ENCODE measurements at regions of chr2 and their contacts with region 1.

Region 1: DNA sequence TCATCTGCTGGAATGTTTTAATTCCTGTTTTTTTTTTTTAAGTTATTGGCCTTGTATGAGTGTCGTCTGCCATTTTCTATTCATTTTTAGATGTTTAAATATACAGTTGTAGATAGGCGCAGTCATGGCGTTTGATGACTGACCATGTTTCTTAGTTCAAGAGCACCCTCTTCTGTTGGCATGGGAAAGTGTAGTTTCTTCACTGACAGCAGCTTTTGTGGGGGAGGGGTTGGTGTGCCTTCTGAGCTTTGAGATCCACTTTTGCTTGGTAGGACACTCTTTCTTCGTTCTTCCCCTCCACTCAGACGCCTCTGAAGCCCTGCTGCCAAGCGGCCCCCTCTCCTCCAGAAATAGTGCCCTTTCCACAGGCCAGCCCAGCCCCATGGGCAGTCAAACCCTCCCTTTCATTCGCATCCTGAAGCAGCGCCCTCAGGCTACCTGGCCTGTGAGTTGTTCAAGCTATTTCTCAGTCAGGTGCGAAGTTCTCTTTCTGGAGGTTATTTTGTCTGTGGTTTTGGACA is 492.0 kb downstream of the TNS1 start:
- DNase-seq: peak; percentile 50
- H3K4me3 ChIP-seq: no peak overlapping the region
- H3K27ac ChIP-seq: no peak overlapping the region
- H3K4me1 ChIP-seq: no peaks in the 10 kb centered on the region
- H3K27me3 ChIP-seq: no peaks in the 10 kb centered on the region
- CTCF ChIP-seq: peak; percentile 28

Region 2: DNA sequence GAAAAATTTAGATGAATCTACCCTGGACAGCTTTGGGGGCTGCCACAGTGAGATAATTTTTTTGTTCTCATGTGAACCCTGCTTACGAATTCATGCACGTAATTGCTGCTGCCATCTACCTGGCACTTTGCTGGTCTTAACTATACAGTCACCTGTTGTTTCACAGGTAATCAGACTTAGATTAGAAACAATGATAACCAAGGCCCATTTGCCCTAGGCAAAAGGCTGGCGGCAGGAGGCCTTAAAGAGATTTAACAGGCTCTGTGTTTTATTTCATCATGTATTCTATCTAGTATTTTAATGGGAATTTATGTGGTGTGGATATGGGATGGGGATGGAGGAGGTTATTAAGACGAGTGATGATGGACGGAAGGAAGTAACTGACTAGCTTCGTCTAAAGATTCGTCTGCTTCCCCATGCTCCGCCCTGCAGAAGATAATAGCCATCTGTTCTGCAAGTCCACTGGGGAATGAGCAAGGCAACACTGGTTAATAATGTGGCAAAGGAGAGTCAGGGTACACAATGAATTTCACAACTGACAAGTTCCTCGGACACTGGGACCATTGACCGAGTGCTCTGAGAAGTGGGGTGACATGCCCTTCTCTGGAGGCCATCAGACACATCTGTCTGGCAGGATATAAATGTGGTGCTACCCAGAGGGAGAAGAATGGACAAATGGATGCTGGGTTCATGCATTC is 359.2 kb before region 1 on chr2:
- intact Hi-C with region 1: loop called (anchors 10 kb)
- DNase-seq: no peak
- H3K4me3 ChIP-seq: no peak overlapping the region
- H3K27ac ChIP-seq: no peak overlapping the region
- H3K4me1 ChIP-seq: no peaks in the 10 kb centered on the region
- H3K27me3 ChIP-seq: no peaks in the 10 kb centered on the region
- CTCF ChIP-seq: no peak